HCT116 (cell line): ENCODE measurements at regions of chr14 and their contacts with region 1.

Region 1: GRCh38 chr14:36070031-36070719 is 106.3 kb downstream of the PTCSC3 start:
- DNase-seq: peak; percentile 55
- ATAC-seq: peak; percentile 82
- H3K4me3 ChIP-seq: no peak overlapping the region
- H3K27ac ChIP-seq: no peak overlapping the region
- H3K4me1 ChIP-seq: peaks cover 12 to 17% of the 10 kb centered on the region in 2 experiments
- H3K27me3 ChIP-seq: no peaks in the 10 kb centered on the region
- CTCF ChIP-seq: peak; percentile 59 to 96 (median 89); a peak in 5 of 6 replicates
- POLR2A ChIP-seq: no peak
- RAD21 ChIP-seq: peak; percentile 80

Region 2: DNA sequence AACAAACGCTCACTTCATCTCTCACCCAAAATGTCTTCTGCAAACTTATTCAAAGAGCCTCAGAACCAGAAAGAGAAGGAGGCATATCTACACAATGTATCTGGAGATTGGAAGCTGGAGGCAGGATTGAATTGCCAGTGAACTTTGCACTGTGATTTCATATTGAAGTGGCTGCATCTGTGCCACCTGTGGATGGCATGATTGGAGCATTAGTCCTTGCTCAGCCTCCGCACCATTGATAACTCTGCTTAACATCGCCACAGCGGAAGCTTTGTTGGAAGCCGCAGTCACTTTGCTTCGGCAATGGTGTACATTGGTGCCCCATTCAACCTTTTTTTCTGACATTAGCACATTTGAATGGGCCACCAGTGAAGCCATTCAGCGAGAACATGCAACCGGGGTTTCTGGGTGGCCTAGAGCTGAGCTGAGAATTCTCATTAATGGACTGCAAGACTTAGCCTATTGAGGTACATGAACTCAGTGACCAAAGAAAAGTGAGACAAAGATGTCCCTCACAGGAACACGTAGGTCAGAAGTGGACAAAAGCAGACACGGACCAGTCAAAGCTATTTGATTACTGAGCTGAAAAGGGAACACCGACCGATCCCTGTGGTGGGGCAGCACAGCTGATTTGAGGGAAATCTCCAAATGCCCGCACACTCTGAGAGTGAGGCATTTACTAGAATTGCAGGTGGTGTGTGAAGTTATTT is 113.6 kb before region 1 on chr14:
- CTCF ChIA-PET with region 1: interaction called, 36 read pairs
- POLR2A ChIA-PET with region 1: no interaction called
- RAD21 ChIA-PET with region 1: interaction called in 1 of 2 experiments, 7 read pairs
- intact Hi-C with region 1: no loop called
- DNase-seq: no peak
- ATAC-seq: no peak
- H3K4me3 ChIP-seq: no peak overlapping the region
- H3K27ac ChIP-seq: no peak overlapping the region
- H3K4me1 ChIP-seq: no peaks in the 10 kb centered on the region
- H3K27me3 ChIP-seq: no peaks in the 10 kb centered on the region
- CTCF ChIP-seq: no peak
- POLR2A ChIP-seq: no peak
- RAD21 ChIP-seq: no peak

Region 3: GRCh38 chr14:36057452-36058141 is 12.6 kb before region 1 on chr14:
- CTCF ChIA-PET with region 1: interaction called, 21 read pairs
- POLR2A ChIA-PET with region 1: no interaction called
- RAD21 ChIA-PET with region 1: no interaction called
- intact Hi-C with region 1: no loop called
- DNase-seq: peak; percentile 16
- ATAC-seq: no peak; the same call in 1 of the 2 replicates
- H3K4me3 ChIP-seq: no peak overlapping the region
- H3K27ac ChIP-seq: no peak overlapping the region
- H3K4me1 ChIP-seq: peaks cover 9 to 10% of the 10 kb centered on the region in 2 experiments
- H3K27me3 ChIP-seq: no peaks in the 10 kb centered on the region
- CTCF ChIP-seq: no peak
- POLR2A ChIP-seq: no peak
- RAD21 ChIP-seq: no peak

Region 4: GRCh38 chr14:36091096-36091495 is 20.9 kb after region 1 on chr14:
- CTCF ChIA-PET with region 1: interaction called, 22 read pairs
- POLR2A ChIA-PET with region 1: no interaction called
- RAD21 ChIA-PET with region 1: interaction called in 1 of 2 experiments, 3 read pairs
- intact Hi-C with region 1: no loop called
- DNase-seq: peak; percentile 19
- ATAC-seq: peak; percentile 75
- H3K4me3 ChIP-seq: no peak overlapping the region
- H3K27ac ChIP-seq: no peak overlapping the region
- H3K4me1 ChIP-seq: peaks cover 6 to 10% of the 10 kb centered on the region in 2 experiments
- H3K27me3 ChIP-seq: no peaks in the 10 kb centered on the region
- CTCF ChIP-seq: no peak
- POLR2A ChIP-seq: no peak
- RAD21 ChIP-seq: no peak

Region 5: DNA sequence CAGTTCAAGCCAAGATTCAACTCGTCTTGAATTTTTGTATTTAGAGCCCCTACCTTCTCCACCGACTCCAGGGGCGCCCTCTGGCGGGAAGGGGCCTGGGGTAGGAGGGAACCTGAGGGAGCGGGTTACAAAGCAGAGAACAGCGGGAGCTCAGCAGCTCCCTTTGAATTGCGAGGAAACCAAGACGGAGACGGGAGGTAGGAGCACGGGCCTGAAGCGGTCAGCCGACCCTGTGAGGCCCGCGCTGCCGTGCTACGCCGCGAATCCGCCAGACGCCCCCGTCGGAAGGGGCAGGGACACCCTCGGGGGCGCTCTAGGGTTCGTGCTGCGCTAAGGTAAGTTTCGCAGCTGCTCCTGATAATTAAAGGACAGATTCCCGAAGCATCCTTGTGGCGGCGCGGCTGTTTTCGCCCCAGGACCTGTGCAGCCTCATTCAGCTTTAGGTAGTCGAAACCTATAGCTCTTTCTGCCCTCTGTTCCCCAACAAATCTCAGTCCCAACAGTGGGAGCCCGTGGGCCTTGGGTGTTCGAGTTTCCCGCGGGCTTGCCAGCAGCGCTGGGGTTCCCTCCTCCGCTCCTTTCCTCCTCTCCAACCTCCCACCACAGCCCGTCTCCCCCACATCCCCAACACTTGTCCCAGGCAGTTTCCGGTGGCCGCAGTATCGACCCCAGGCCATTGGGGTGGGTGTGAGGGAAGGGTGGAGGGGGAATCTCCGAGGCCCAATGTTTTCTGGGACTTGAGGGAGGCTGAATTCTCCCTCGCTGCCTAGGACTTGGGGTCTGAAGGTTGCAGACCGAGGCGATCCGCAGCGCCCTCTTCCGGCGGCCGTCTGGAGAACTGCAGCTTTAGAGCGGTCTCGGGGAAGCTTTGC is 454.9 kb after region 1 on chr14:
- CTCF ChIA-PET with region 1: interaction called, 30 read pairs
- POLR2A ChIA-PET with region 1: no interaction called
- RAD21 ChIA-PET with region 1: interaction called, 8 read pairs
- intact Hi-C with region 1: loop called (anchors 1 kb)
- DNase-seq: peak; percentile 65
- ATAC-seq: peak; percentile 88
- H3K4me3 ChIP-seq: peak overlapping the region; percentile 39 to 56
- H3K27ac ChIP-seq: no peak overlapping the region
- H3K4me1 ChIP-seq: peaks cover 0 to 21% of the 10 kb centered on the region in 2 experiments; a peak in 2 of 4 replicates
- H3K27me3 ChIP-seq: peaks cover 4% of the 10 kb centered on the region; the same call in 1 of the 2 replicates
- CTCF ChIP-seq: peak; percentile 59 to 84 (median 79); a peak in 5 of 6 replicates
- POLR2A ChIP-seq: no peak
- RAD21 ChIP-seq: peak; percentile 56

Region 6: GRCh38 chr14:36604757-36605505 is 534.8 kb after region 1 on chr14:
- CTCF ChIA-PET with region 1: interaction called, 36 read pairs
- POLR2A ChIA-PET with region 1: no interaction called
- RAD21 ChIA-PET with region 1: no interaction called
- intact Hi-C with region 1: loop called (anchors 2 kb)
- DNase-seq: peak; percentile 76
- ATAC-seq: peak; percentile 94
- H3K4me3 ChIP-seq: no peak overlapping the region
- H3K27ac ChIP-seq: no peak overlapping the region
- H3K4me1 ChIP-seq: peaks cover 0 to 9% of the 10 kb centered on the region in 2 experiments; a peak in 2 of 4 replicates
- H3K27me3 ChIP-seq: no peaks in the 10 kb centered on the region
- CTCF ChIP-seq: peak; percentile 77 to 83 (median 80)
- POLR2A ChIP-seq: no peak
- RAD21 ChIP-seq: peak; percentile 82

Region 7: GRCh38 chr14:37150414-37150813 is 1080.2 kb after region 1 on chr14:
- CTCF ChIA-PET with region 1: interaction called, 26 read pairs
- POLR2A ChIA-PET with region 1: no interaction called
- RAD21 ChIA-PET with region 1: no interaction called
- intact Hi-C with region 1: loop called (anchors 5 kb)
- DNase-seq: no peak
- ATAC-seq: peak; percentile 91
- H3K4me3 ChIP-seq: no peak overlapping the region
- H3K27ac ChIP-seq: no peak overlapping the region
- H3K4me1 ChIP-seq: peaks cover 0 to 3% of the 10 kb centered on the region in 2 experiments; a peak in 1 of 4 replicates
- H3K27me3 ChIP-seq: no peaks in the 10 kb centered on the region
- CTCF ChIP-seq: peak; percentile 62 to 89 (median 69); a peak in 5 of 6 replicates
- POLR2A ChIP-seq: no peak
- RAD21 ChIP-seq: peak; percentile 68